Left ventricle myocardium inferior (tissue), 1 donor: ENCODE measurements at regions of chr9 and their contacts with region 1.

Region 1: DNA sequence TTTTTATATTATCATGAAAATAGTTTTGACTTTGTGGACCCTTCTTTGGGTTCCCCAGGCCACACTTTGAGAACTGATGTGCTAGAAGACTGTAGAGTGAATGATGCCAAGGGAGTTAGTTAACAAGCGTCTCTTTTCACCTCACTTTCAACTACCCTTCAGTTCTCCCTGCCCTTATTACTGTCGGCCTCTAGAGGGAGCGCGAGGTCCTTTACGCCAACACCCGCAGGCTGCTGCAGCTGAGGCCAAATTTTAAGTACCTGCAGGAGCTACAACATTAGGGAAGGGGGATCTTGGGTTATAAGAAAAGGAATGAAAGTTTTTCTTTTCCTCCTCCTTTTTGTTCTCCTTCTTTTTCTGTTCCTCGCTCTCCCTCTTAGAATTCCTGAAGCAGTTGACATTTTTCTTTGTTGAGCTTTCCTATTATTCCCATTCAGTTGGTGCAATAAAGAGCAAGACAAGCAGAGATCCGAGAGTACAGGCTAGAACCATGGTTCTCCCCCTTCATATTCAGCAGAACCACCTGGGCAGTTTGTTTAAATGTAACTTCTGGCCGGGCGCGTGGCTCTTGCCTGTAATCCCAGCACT is 84.0 kb downstream of the ZFAND5 start:
- DNase-seq: peak; percentile 66
- H3K4me3 ChIP-seq: no peak overlapping the region
- H3K27ac ChIP-seq: no peak overlapping the region
- H3K4me1 ChIP-seq: no peaks in the 10 kb centered on the region
- H3K27me3 ChIP-seq: no peaks in the 10 kb centered on the region
- CTCF ChIP-seq: peak; percentile 97

Region 2: GRCh38 chr9:71748280-71748743 is 532.7 kb before region 1 on chr9:
- intact Hi-C with region 1: no loop called
- DNase-seq: no peak
- H3K4me3 ChIP-seq: no peak overlapping the region
- H3K27ac ChIP-seq: no peak overlapping the region
- H3K4me1 ChIP-seq: peaks cover 8% of the 10 kb centered on the region
- H3K27me3 ChIP-seq: no peaks in the 10 kb centered on the region
- CTCF ChIP-seq: no peak

Region 3: DNA sequence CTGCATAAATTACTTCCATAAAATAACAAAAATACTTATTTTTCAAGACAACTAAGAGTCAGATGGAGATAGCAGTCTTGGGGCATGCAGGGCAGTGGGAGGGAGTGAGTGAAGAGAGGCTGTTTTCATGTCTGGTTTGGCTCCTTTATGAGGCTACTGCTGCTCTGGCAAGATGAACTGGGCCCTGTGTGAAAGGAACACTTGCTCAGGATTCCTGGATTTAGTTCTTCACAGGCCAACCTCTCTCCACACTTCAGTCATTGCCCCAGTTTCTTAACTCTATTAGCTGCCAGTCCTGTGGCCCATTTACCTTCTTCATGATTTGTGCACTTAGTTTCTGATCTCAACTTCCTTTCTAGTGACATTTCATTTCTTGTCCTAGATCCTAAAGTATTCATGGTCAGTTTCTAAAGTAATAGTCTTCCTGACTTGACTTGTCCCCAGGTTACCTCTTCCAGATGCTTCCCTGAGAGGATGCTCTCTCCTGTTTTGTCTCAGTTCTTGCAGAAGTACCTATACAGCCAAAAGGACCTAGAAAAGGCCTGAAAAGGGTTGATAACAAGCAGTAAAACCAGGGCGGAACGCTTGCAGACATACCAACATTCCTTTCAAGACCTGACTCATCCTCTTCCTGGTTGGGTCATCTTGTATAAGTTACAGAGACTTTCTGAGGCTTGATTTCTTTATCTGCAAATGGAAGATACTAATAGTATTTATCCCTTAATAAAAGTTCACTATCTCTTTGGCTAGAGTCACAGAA is 161.0 kb after region 1 on chr9:
- intact Hi-C with region 1: no loop called
- DNase-seq: no peak
- H3K4me3 ChIP-seq: no peak overlapping the region
- H3K27ac ChIP-seq: no peak overlapping the region
- H3K4me1 ChIP-seq: no peaks in the 10 kb centered on the region
- H3K27me3 ChIP-seq: no peaks in the 10 kb centered on the region
- CTCF ChIP-seq: no peak

Region 4: GRCh38 chr9:72592502-72593403 is 311.7 kb after region 1 on chr9:
- intact Hi-C with region 1: loop called (anchors 5 kb)
- DNase-seq: no peak
- H3K4me3 ChIP-seq: no peak overlapping the region
- H3K27ac ChIP-seq: no peak overlapping the region
- H3K4me1 ChIP-seq: peaks cover 11% of the 10 kb centered on the region
- H3K27me3 ChIP-seq: no peaks in the 10 kb centered on the region
- CTCF ChIP-seq: peak; percentile 87

Region 5: DNA sequence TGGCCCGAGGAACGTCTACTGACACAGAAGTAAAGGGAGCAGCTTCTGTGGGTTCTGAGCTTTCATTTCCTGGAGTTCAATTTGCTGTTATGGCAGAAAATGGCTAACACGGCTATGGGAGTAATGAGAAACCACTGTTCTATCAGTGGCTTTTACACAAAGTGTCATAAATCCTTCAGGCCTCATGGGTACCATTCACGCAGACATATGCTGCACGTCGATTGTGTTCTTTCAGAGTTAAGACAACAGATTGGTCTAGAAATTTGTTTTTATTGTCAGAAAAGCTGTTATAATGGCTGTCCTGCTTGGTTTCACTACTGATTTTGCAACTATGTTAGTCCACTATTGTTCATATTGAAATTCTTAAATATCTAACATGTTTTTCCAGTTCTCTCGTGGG is 536.4 kb after region 1 on chr9:
- intact Hi-C with region 1: loop called (anchors 5 kb)
- DNase-seq: no peak
- H3K4me3 ChIP-seq: no peak overlapping the region
- H3K27ac ChIP-seq: no peak overlapping the region
- H3K4me1 ChIP-seq: no peaks in the 10 kb centered on the region
- H3K27me3 ChIP-seq: peaks cover 4% of the 10 kb centered on the region
- CTCF ChIP-seq: no peak